Activated T-helper 1 cell treated with anti-CD3 and anti-CD28 coated beads, Interleukin-12 subunit alpha, Interleukin-12 subunit beta, Interleukin-2, Interleukin-4 antibody, amounts not matched to agents 30 ng/mL and 10 ng/mL and 1 ng/mL, durations not matched to agents 14 hours and 24 hours and 36 hours (primary cell): ENCODE measurements at regions of chr1 and their contacts with region 1.

Region 1: GRCh38 chr1:55021965-55022546 is 17.3 kb upstream of the PCSK9 start:
- DNase-seq: peak; percentile 43
- H3K4me3 Mint-ChIP-seq: no peak overlapping the region
- H3K27ac Mint-ChIP-seq: no peak overlapping the region
- H3K4me1 Mint-ChIP-seq: peaks cover 5% of the 10 kb centered on the region
- H3K27me3 Mint-ChIP-seq: peaks cover 2% of the 10 kb centered on the region

Region 2: GRCh38 chr1:54944610-54945544 is 77.2 kb before region 1 on chr1:
- intact Hi-C with region 1: loop called (anchors 1 kb)
- DNase-seq: peak; percentile 53
- H3K4me3 Mint-ChIP-seq: no peak overlapping the region
- H3K27ac Mint-ChIP-seq: peak overlapping the region; percentile 28
- H3K4me1 Mint-ChIP-seq: peaks cover 13% of the 10 kb centered on the region
- H3K27me3 Mint-ChIP-seq: peaks cover 17% of the 10 kb centered on the region

Region 3: DNA sequence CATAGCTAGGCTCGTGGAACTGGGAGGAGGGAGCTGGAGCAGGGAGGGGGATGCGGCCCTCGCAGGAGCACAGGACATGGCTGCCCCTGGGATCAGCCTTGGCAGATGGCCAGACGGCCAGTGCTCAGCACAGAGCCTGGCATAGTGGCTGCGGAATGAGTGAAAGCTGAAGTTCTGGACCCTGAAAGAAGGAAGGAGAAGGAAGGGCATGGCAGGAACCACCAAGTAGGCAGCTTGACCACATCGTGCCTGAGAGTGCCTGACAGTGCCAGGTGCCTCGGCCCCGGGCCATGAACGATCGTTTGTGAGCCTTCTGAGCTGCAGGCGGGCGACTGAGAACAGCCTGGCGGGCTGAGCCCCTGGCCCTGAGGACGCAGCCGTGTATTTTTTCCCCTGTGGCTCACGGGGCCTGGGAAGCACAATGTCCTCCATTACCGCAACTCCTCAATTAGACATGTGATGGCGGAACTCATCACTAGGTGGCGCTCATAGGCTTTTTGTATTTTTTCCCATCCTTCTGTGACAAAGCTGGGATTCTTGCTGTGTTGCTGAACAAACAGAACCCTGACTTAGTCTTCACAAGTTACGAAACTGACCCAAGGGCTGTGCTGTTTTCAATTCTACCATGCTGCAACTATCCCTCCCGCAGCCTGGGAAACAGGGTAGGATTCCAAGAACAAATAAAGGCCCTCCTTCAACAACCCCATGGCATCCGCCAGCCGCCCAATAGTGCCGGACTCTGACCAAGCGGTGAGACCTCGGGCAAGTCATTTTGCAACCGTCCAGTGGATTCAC is 71.5 kb before region 1 on chr1:
- intact Hi-C with region 1: loop called (anchors 1 kb)
- DNase-seq: peak; percentile 38
- H3K4me3 Mint-ChIP-seq: no peak overlapping the region
- H3K27ac Mint-ChIP-seq: no peak overlapping the region
- H3K4me1 Mint-ChIP-seq: peaks cover 17% of the 10 kb centered on the region
- H3K27me3 Mint-ChIP-seq: peaks cover 9% of the 10 kb centered on the region